ENCODE measurements at regions of chr11 and their contacts with region 1.

Region 1: DNA sequence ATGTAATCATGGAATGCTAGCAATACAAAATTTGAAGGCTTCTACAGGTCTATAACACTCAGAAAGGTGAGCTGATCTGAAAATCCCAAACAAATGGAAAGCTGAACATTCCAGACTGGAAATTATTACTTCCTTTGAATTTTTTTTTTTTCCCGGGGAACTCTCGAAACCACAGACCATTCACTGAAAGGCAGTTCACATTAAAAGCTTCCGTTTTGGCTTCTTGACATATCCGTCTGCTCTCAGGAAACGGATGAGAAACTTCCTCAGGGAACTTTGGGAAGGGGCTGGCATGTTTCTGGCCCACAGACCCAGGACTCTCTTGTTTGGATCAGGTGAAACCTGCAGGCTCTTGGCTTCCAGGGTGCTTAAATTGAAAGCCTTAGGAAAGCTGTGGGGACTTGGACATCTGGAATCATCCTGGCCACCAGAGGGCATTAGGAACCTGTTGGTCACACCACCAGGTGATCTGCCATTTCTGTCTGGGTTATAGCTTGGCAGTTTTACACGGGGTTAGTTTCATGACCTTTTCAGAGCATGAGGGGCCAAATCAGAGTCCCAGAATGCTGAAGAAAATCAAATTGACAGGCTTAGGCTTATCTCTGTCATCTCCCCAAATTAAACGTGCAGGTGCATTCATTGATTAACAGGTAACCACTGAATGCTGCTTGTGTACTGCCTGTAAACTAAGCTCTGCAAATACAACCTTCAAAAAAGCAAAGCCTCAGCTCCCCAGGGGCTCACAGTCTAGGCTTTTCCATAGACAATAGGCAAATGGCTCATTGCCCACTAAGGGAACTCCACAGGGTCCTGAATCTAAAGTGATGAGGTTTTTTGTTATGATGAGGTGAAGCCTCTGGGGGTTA is 22.7 kb upstream of the GRAMD1B start:
- DNase-seq: peak; percentile 57
- H3K4me3 ChIP-seq: no peak overlapping the region
- H3K27ac ChIP-seq: no peak overlapping the region
- H3K4me1 ChIP-seq: peaks cover 0 to 11% of the 10 kb centered on the region in 2 experiments; a peak in 2 of 4 replicates
- H3K27me3 ChIP-seq: no peaks in the 10 kb centered on the region
- CTCF ChIP-seq: peak; percentile 81
- EP300 ChIP-seq: no peak
- RAD21 ChIP-seq: peak; percentile 87

Region 2: GRCh38 chr11:123308077-123308476 is 99.3 kb before region 1 on chr11:
- CTCF ChIA-PET with region 1: interaction called, 16 read pairs
- POLR2A ChIA-PET with region 1: no interaction called
- DNase-seq: peak; percentile 62
- H3K4me3 ChIP-seq: no peak overlapping the region
- H3K27ac ChIP-seq: peak overlapping the region; percentile 55 to 63
- H3K4me1 ChIP-seq: peaks cover 5 to 24% of the 10 kb centered on the region in 2 experiments; a peak in 3 of 4 replicates
- H3K27me3 ChIP-seq: no peaks in the 10 kb centered on the region
- CTCF ChIP-seq: no peak
- EP300 ChIP-seq: peak in 1 of 2 experiments; percentile 70; a peak in 2 of 4 replicates
- RAD21 ChIP-seq: 0 out of 2 replicates have a peak, but pooled peaks have one; percentile 4

Region 3: GRCh38 chr11:123429913-123430720 is 22.8 kb after region 1 on chr11 and contains the start of gene GRAMD1B:
- CTCF ChIA-PET with region 1: interaction called, 39 read pairs
- POLR2A ChIA-PET with region 1: no interaction called
- DNase-seq: peak; percentile 87
- H3K4me3 ChIP-seq: peak within 1 kb of the TSS; percentile 61 to 73
- H3K27ac ChIP-seq: peak within 1 kb of the TSS in 1 of 2 experiments; percentile 87; a peak in 2 of 4 replicates
- H3K4me1 ChIP-seq: peaks cover 8 to 13% of the 10 kb centered on the region in 2 experiments; a peak in 3 of 4 replicates
- H3K27me3 ChIP-seq: no peaks in the 10 kb centered on the region
- CTCF ChIP-seq: peak; percentile 33
- EP300 ChIP-seq: no peak
- RAD21 ChIP-seq: no peak
- polyA plus RNA-seq, gene GRAMD1B: 14.0 and 14.5 TPM in 2 replicates

Region 4: DNA sequence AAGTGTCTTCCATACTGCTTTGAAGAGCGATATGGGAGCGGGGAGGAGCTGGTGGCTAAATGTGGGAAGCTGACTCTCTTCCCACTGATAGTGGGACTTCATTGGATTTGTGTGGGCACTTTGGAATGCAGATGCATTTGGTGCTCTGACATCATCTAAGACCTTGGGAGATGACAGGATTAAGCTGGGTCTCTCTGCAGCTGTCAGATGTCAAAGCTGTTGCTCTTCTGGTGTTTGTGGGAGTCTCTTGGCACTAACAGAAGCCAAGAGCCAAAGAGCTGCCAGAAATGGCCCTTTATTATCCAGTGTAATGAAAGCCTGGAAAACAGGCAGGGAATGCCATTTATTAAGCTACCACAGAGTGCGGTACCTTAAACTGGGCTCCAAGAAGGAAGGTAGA is 43.3 kb after region 1 on chr11:
- CTCF ChIA-PET with region 1: interaction called, 11 read pairs
- POLR2A ChIA-PET with region 1: no interaction called
- DNase-seq: no peak
- H3K4me3 ChIP-seq: no peak overlapping the region
- H3K27ac ChIP-seq: peak overlapping the region in 1 of 2 experiments; percentile 25; a peak in 1 of 4 replicates
- H3K4me1 ChIP-seq: peaks cover 13 to 15% of the 10 kb centered on the region in 2 experiments; a peak in 3 of 4 replicates
- H3K27me3 ChIP-seq: no peaks in the 10 kb centered on the region
- CTCF ChIP-seq: no peak
- EP300 ChIP-seq: no peak
- RAD21 ChIP-seq: no peak

Region 5: GRCh38 chr11:123478352-123478987 is 71.1 kb after region 1 on chr11:
- CTCF ChIA-PET with region 1: interaction called, 198 read pairs
- POLR2A ChIA-PET with region 1: no interaction called
- DNase-seq: peak; percentile 76
- H3K4me3 ChIP-seq: no peak overlapping the region
- H3K27ac ChIP-seq: peak overlapping the region in 1 of 2 experiments; percentile 21; a peak in 1 of 4 replicates
- H3K4me1 ChIP-seq: peaks cover 10 to 28% of the 10 kb centered on the region in 2 experiments; a peak in 3 of 4 replicates
- H3K27me3 ChIP-seq: no peaks in the 10 kb centered on the region
- CTCF ChIP-seq: peak; percentile 79
- EP300 ChIP-seq: no peak
- RAD21 ChIP-seq: peak; percentile 93

Region 6: DNA sequence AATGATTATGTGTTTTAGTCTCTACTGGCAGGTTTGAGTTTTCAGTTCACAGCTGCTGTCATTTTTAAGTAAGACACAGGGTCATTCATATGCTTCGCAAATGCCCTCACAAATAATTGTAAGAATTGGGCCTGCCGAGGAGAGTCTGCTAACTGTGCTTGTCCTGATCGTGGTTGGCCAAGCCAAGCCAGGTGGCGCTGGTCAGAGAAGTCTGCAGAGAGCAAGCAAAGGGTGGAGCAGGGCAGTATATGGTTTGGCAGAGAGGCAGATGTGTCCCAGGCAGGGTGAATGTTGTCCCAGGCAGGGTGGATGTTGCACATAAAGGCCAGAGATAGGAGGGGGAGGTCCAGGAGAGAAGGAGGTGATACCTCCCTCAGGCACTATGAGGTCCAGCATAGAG is 194.4 kb after region 1 on chr11:
- CTCF ChIA-PET with region 1: no interaction called
- POLR2A ChIA-PET with region 1: no interaction called
- DNase-seq: no peak
- H3K4me3 ChIP-seq: no peak overlapping the region
- H3K27ac ChIP-seq: no peak overlapping the region
- H3K4me1 ChIP-seq: no peaks in the 10 kb centered on the region
- H3K27me3 ChIP-seq: no peaks in the 10 kb centered on the region
- CTCF ChIP-seq: no peak
- EP300 ChIP-seq: no peak
- RAD21 ChIP-seq: no peak